Transverse colon (tissue), 4 donors: ENCODE measurements at regions of chr2 and their contacts with region 1.

Region 1: DNA sequence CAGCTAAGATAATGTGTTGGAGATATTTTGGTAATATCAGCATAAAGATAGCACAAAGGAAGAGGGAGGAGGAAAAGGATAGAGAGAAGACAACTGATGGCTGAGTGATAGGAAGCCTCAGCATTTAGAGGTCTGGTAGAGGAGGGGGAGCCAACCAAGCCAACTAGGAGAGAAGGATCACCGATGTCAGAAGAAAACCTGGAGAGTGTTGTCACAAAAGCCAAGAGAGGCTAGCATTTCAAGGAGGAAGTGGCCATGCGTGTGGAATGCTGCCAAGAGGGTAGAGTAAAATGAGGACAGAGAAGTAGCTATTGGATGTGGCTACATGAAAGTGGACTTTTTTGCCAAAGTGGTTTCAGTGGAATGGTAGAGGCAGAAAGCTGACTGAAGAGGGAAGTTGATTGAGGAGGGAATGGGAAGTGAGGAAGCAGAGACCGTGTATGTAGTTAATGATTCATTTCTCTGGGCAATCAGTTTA is 34.3 kb downstream of the LCLAT1 start:
- DNase-seq: peak; percentile 31
- H3K4me3 ChIP-seq: no peak overlapping the region
- H3K27ac ChIP-seq: peak overlapping the region; percentile 60 to 69 (median 66)
- H3K4me1 ChIP-seq: peaks cover 8 to 26% (median 21%) of the 10 kb centered on the region in 4 donors
- H3K27me3 ChIP-seq: no peaks in the 10 kb centered on the region
- CTCF ChIP-seq: no peak
- EP300 ChIP-seq: no peak
- POLR2A ChIP-seq: no peak

Region 2: DNA sequence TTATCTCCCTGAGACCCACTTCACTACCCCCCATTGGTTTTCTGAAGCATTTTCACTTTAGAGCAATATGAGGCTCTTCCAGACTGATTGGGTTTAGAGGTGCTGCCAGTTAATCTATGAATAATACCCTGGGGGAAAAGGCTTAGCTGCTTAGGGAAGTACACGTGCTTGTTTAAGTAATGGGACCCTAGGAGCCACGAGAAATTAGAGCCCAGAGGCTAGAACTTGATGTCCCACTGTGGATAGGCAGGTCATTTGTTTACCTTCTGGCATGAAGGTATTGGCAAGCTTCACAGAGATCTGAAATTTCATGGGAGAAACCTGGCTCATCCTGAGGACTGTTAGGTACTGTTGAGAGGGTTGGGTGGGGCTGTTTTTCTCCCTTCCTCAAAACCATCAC is 1306.4 kb before region 1 on chr2:
- in situ Hi-C with region 1: no loop called
- intact Hi-C with region 1: no loop called
- DNase-seq: no peak
- H3K4me3 ChIP-seq: no peak overlapping the region
- H3K27ac ChIP-seq: no peak overlapping the region
- H3K4me1 ChIP-seq: no peaks in the 10 kb centered on the region
- H3K27me3 ChIP-seq: no peaks in the 10 kb centered on the region
- CTCF ChIP-seq: no peak
- EP300 ChIP-seq: no peak
- POLR2A ChIP-seq: no peak

Region 3: DNA sequence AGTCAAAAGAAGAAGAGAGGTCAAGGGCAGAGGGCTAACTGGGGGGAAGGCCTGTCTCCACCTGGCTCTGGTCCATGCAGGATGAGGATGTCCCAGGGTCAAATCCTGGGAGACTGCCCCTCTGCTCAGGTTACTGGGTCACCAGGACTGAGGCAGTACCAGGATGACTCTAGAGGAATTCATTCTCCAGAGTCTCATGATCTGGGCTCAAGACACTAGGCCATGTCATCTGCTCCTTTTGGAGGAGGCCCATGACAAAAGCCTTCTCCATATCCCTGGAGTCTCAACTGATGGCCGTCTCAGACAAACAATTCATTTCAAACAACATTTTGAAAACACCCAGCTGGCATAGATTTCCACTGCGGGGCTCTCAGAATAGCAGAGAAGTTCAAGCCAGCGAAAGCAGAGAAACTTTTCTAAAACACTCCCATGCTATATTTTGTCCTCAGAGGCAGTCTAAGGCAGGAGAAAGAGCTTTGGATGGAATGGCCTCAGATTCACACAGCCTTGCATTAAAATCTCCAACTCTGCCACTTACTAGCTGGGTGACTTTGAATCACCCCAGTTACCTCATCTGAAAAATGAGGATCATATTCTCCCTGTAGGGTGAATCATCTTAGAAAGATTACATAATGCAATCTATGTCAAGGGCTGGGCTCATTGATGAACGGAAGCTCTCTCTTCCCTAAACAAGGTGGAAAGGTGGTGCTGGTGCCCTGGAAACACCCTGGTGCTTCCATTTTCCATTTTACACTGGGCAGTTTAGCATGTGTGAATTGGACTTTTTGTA is 83.1 kb before region 1 on chr2:
- in situ Hi-C with region 1: no loop called
- intact Hi-C with region 1: no loop called
- DNase-seq: no peak
- H3K4me3 ChIP-seq: no peak overlapping the region
- H3K27ac ChIP-seq: no peak overlapping the region
- H3K4me1 ChIP-seq: peaks cover 3 to 15% (median 7%) of the 10 kb centered on the region in 4 donors
- H3K27me3 ChIP-seq: no peaks in the 10 kb centered on the region
- CTCF ChIP-seq: no peak
- EP300 ChIP-seq: no peak
- POLR2A ChIP-seq: no peak

Region 4: GRCh38 chr2:30456106-30456505 is 25.3 kb before region 1 on chr2:
- in situ Hi-C with region 1: no loop called
- intact Hi-C with region 1: loop called (anchors 1 kb)
- DNase-seq: no peak
- H3K4me3 ChIP-seq: no peak overlapping the region
- H3K27ac ChIP-seq: peak overlapping the region in 2 of 4 donors; percentile 27 to 60
- H3K4me1 ChIP-seq: peaks cover 3 to 22% (median 14%) of the 10 kb centered on the region in 4 donors
- H3K27me3 ChIP-seq: no peaks in the 10 kb centered on the region
- CTCF ChIP-seq: no peak
- EP300 ChIP-seq: no peak
- POLR2A ChIP-seq: no peak

Region 5: GRCh38 chr2:31038385-31038784 is 557.0 kb after region 1 on chr2:
- in situ Hi-C with region 1: no loop called
- intact Hi-C with region 1: no loop called
- DNase-seq: no peak
- H3K4me3 ChIP-seq: no peak overlapping the region
- H3K27ac ChIP-seq: no peak overlapping the region
- H3K4me1 ChIP-seq: no peaks in the 10 kb centered on the region
- H3K27me3 ChIP-seq: no peaks in the 10 kb centered on the region
- CTCF ChIP-seq: no peak
- EP300 ChIP-seq: no peak
- POLR2A ChIP-seq: no peak